Mammary epithelial cell (primary cell): ENCODE measurements at regions of chr6 and their contacts with region 1.

Region 1: GRCh38 chr6:12090714-12091113 is 78.6 kb downstream of the HIVEP1 start:
- DNase-seq: no peak
- H3K4me3 ChIP-seq: no peak overlapping the region
- H3K27ac ChIP-seq: no peak overlapping the region
- H3K4me1 ChIP-seq: no peaks in the 10 kb centered on the region
- H3K27me3 ChIP-seq: no peaks in the 10 kb centered on the region
- CTCF ChIP-seq: no peak

Region 2: DNA sequence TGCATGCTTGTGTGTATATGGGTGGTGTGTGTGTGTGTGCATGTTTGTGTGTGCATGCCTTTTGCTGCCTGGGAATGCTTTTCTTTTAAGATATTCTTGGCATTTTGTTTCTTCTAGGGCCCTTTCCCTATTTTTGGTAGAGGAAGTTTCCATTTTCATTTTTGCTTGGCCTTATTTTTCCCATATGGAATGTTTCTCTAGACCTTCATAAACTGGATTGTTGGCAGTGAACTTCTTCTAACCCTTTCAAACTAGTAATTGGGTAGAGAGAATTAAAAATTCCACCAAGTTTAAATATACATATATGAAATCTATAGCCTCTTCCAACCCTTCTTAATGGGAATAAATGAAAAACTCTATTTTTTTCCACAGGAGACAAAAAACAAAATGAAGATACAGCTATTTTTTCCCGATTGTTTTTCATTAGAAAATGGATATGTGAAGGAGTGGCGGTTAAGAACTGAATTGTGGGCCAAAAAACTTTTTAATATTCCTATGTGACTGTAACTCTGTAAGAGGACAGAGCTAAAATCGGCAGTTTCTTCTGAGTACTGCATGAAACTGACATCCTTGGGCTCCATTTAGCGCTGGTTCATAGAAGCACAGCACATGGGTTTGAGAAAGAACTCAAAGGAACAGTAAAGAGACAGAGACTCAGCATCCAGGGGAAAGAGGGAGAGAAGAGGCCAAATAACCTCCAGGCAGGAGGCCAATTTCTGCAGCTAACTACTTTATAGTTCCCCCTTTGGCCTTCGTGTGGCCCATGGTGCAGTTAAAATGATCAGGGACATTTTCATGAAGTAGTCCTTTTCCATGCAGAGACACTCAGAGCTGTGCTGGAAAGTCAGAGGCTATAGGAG is 451.1 kb before region 1 on chr6:
- CTCF ChIA-PET with region 1: interaction called, 20 read pairs
- dilution Hi-C with region 1: no loop called
- in situ Hi-C with region 1: no loop called
- intact Hi-C with region 1: no loop called
- DNase-seq: no peak
- H3K4me3 ChIP-seq: no peak overlapping the region
- H3K27ac ChIP-seq: no peak overlapping the region
- H3K4me1 ChIP-seq: no peaks in the 10 kb centered on the region
- H3K27me3 ChIP-seq: no peaks in the 10 kb centered on the region
- CTCF ChIP-seq: no peak

Region 3: GRCh38 chr6:12011276-12012076 is 79.2 kb before region 1 on chr6:
- CTCF ChIA-PET with region 1: no interaction called
- dilution Hi-C with region 1: no loop called
- in situ Hi-C with region 1: no loop called
- intact Hi-C with region 1: no loop called
- DNase-seq: peak; percentile 96
- H3K4me3 ChIP-seq: peak overlapping the region in 2 of 3 experiments; percentile 73 to 85
- H3K27ac ChIP-seq: peak overlapping the region; percentile 21
- H3K4me1 ChIP-seq: peaks cover 21% of the 10 kb centered on the region
- H3K27me3 ChIP-seq: no peaks in the 10 kb centered on the region
- CTCF ChIP-seq: no peak

Region 4: GRCh38 chr6:12941422-12941821 is 850.7 kb after region 1 on chr6:
- CTCF ChIA-PET with region 1: no interaction called
- dilution Hi-C with region 1: no loop called
- in situ Hi-C with region 1: no loop called
- intact Hi-C with region 1: no loop called
- DNase-seq: no peak
- H3K4me3 ChIP-seq: no peak overlapping the region
- H3K27ac ChIP-seq: no peak overlapping the region
- H3K4me1 ChIP-seq: no peaks in the 10 kb centered on the region
- H3K27me3 ChIP-seq: peaks cover 2% of the 10 kb centered on the region
- CTCF ChIP-seq: no peak